HCT116 (cell line): ENCODE measurements at regions of chr7 and their contacts with region 1.

Region 1: DNA sequence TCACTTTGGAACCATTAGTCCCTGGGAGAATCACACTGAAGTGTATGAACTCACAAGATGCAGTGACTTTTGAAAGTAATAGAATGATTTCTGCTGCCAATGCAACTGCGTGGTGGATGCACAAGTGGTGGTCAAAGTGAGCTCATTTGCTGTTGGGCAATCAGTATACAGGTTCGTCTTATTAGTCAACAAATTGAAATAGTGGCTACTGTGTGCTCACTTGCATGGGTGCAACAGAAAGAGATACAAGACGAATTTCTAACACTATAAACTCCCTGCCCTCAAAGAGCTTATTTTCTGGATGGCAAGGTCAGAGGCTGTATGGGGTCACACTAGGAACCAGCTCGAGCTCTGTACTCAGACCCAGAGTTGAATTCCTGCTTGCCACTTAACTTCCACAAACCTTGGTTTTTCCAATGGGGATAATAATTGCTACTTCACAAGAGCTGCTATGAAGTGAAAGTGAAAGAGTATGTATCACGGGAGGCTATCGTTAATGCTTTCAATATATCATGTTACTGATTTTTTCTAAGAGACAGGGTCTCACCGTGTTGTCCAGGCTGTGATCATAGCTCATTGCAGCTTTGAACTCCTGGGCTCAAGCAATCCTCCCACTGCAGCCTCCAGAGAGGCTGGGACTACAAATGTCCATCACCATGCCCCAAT is 8.3 kb upstream of the BCL7B start:
- DNase-seq: no peak
- ATAC-seq: no peak
- H3K4me3 ChIP-seq: no peak overlapping the region
- H3K27ac ChIP-seq: no peak overlapping the region
- H3K4me1 ChIP-seq: peaks cover 6 to 12% of the 10 kb centered on the region in 2 experiments
- H3K27me3 ChIP-seq: no peaks in the 10 kb centered on the region
- CTCF ChIP-seq: no peak
- POLR2A ChIP-seq: no peak
- RAD21 ChIP-seq: no peak

Region 2: GRCh38 chr7:73578342-73579127 is 12.7 kb after region 1 on chr7 and contains the start of gene TBL2:
- CTCF ChIA-PET with region 1: no interaction called
- POLR2A ChIA-PET with region 1: interaction called, 18 read pairs
- RAD21 ChIA-PET with region 1: interaction called in 1 of 2 experiments, 3 read pairs
- intact Hi-C with region 1: no loop called
- DNase-seq: peak; percentile 96
- ATAC-seq: peak; percentile 88
- H3K4me3 ChIP-seq: peak within 1 kb of the TSS; percentile 83 to 87
- H3K27ac ChIP-seq: peak within 1 kb of the TSS; percentile 93
- H3K4me1 ChIP-seq: peaks cover 25 to 28% of the 10 kb centered on the region in 2 experiments
- H3K27me3 ChIP-seq: no peaks in the 10 kb centered on the region
- CTCF ChIP-seq: no peak
- POLR2A ChIP-seq: peak; percentile 96
- RAD21 ChIP-seq: no peak
- total RNA-seq, gene TBL2: 55.0 TPM